HepG2 (cell line): ENCODE measurements at regions of chr4 and their contacts with region 1.

Region 1: DNA sequence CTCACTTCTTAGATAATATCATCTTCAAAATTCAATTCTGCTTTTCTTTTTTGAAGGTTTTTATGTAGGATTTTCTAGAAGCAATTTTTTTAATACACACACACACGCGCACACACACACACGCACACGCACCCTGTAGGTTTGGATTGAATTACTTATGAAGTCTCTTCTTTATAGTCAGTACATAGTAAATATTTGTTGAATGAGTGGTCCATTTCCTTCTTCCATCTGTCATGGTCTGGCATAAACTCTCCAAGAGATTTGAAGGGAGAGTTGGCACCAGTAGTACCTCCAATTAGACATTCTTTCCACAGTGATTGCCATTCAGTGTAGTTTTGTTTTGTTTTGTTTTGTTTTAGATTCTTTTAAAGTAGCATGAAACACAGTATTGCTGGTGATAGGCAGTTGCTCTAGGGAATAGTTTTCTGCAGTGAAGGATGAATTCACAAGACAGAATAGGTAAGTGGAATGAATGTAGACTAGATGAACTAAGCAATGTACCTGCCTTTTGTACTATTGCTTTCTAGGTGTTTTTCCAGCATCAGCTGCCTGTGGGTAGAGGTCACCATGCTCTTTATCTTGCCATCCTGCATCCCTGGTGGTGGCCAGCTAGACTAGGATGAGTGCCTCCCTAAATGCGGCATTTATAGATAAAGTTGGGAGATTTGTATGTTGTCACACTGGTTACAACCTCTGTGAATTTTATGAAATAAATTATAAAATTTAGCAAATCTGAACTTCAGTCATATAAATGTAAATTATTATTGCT is 20.5 kb downstream of the PDLIM5 start:
- DNase-seq: peak; percentile 41
- ATAC-seq: peak; percentile 51
- H3K4me3 ChIP-seq: no peak overlapping the region; a peak in 1 of 6 replicates
- H3K27ac ChIP-seq: peak overlapping the region; percentile 71
- H3K4me1 ChIP-seq: peaks cover 82% of the 10 kb centered on the region
- H3K27me3 ChIP-seq: no peaks in the 10 kb centered on the region
- CTCF ChIP-seq: no peak
- EP300 ChIP-seq: no peak
- POLR2A ChIP-seq: no peak
- RAD21 ChIP-seq: no peak

Region 2: GRCh38 chr4:94457692-94458106 is 14.5 kb before region 1 on chr4:
- CTCF ChIA-PET with region 1: no interaction called
- POLR2A ChIA-PET with region 1: interaction called, 14 read pairs
- in situ Hi-C with region 1: no loop called
- intact Hi-C with region 1: loop called (anchors 1 kb)
- DNase-seq: no peak
- ATAC-seq: no peak
- H3K4me3 ChIP-seq: 0 out of 6 replicates have a peak overlapping the region, but pooled peaks of 1 of the 3 experiments have one; percentile 10
- H3K27ac ChIP-seq: peak overlapping the region; percentile 37
- H3K4me1 ChIP-seq: peaks cover 79% of the 10 kb centered on the region
- H3K27me3 ChIP-seq: no peaks in the 10 kb centered on the region; a peak in 1 of 5 replicates
- CTCF ChIP-seq: no peak
- EP300 ChIP-seq: no peak
- POLR2A ChIP-seq: no peak
- RAD21 ChIP-seq: no peak

Region 3: DNA sequence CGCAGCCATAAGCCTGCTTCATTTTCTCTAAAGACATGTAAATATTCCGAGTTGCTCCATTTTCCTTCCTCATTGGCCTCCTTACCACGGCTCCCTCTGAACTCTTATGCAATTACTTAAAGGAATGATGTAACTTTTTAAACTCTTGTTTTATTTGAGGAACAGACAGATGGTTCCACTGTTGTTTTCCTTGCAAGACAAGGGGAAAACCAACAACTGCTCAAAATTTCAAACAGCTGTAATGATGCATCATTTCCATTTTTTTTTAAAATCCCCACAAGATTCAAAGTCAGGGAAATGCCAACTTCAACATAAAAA is 744.0 kb after region 1 on chr4:
- CTCF ChIA-PET with region 1: no interaction called
- POLR2A ChIA-PET with region 1: no interaction called
- in situ Hi-C with region 1: no loop called
- intact Hi-C with region 1: no loop called
- DNase-seq: no peak
- ATAC-seq: no peak
- H3K4me3 ChIP-seq: no peak overlapping the region
- H3K27ac ChIP-seq: no peak overlapping the region
- H3K4me1 ChIP-seq: peaks cover 16% of the 10 kb centered on the region
- H3K27me3 ChIP-seq: peaks cover 0 to 33% of the 10 kb centered on the region in 2 experiments; a peak in 3 of 5 replicates
- CTCF ChIP-seq: no peak
- EP300 ChIP-seq: no peak
- POLR2A ChIP-seq: no peak
- RAD21 ChIP-seq: no peak